Naive thymus-derived CD4-positive, alpha-beta T cell (primary cell): ENCODE measurements at regions of chrX and their contacts with region 1.

Region 1: DNA sequence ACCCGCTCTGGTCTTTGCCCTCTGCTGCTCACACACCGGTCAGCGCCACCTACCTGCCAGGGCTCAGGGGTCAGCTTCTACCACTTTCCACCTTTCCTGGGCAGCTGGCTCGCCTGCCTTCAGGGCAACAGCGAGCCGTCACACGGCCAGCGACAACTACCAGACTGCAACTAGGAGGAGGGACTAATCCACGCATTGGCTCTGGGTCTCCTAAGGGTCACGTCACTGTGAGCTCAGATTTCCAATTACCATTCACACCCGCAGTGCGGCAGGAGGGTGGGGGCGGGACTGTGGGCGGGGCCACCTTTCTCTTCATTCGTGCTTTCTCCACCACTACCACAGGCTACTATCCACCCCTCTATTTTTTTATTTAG is at the start of gene BEX5:
- DNase-seq: peak in 8 of 9 donors; percentile 20 to 74 (median 62)
- ATAC-seq: peak; percentile 98
- H3K4me3 ChIP-seq: peak within 1 kb of the TSS; percentile 74
- H3K4me3 Mint-ChIP-seq: peak within 1 kb of the TSS; percentile 92 to 99 (median 98)
- H3K27ac ChIP-seq: peak within 1 kb of the TSS; percentile 83
- H3K27ac Mint-ChIP-seq: peak within 1 kb of the TSS; percentile 92 to 99 (median 96)
- H3K4me1 ChIP-seq: no peaks in the 10 kb centered on the region
- H3K4me1 Mint-ChIP-seq: peaks cover 4 to 20% (median 5%) of the 10 kb centered on the region in 7 donors
- H3K27me3 ChIP-seq: no peaks in the 10 kb centered on the region
- H3K27me3 Mint-ChIP-seq: peaks cover 0 to 6% (median 0%) of the 10 kb centered on the region in 5 donors
- total RNA-seq, gene BEX5: 1.8 to 10.1 (median 6.8) TPM

Region 2: DNA sequence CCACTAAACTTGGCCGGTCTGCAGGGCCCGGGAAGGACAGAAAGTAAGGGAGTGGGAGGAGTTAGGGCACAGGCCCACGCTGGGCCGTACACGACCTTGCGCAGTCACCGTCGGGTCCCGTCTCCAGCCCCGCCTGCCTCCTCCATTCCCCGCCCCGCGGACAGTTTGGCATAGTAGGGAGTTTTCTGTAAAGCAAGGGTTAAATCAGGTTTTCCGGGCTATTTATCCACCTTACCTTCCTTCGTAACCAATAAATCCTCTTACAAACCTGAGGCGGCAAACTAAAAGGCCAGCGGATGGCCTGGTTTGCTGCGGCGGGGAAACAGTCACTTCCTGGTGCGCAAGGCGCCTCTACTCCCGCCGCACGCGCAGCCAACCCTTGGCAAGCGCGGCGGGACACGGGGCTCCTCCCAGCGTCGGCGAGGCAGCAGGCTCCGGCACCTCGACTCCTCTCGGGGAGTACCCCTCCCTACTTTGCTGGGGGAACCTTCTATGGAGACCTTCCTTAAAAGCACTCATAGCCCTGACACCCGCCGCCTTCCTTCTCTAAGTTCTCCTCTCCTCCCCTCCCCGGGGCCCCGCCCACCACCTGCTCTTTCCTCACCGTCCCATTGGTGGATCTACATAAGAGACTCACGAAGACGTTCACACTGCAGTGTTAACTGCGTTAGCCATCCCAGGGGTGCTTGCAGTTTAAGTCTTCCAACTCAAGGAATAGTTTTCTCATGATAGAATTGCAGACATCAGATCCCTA is 1104.1 kb before region 1 on chrX and contains the start of gene TRMT2B:
- CTCF ChIA-PET with region 1: no interaction called
- POLR2A ChIA-PET with region 1: interaction called, 5 read pairs
- intact Hi-C with region 1: loop called in 1 of 2 experiments (anchors 5 kb)
- DNase-seq: peak; percentile 47 to 87 (median 80)
- ATAC-seq: peak; percentile 92
- H3K4me3 ChIP-seq: peak within 1 kb of the TSS; percentile 81
- H3K4me3 Mint-ChIP-seq: peak within 1 kb of the TSS; percentile 78 to 94 (median 92)
- H3K27ac ChIP-seq: peak within 1 kb of the TSS; percentile 93
- H3K27ac Mint-ChIP-seq: peak within 1 kb of the TSS; percentile 95 to 98 (median 97)
- H3K4me1 ChIP-seq: peaks cover 4% of the 10 kb centered on the region in 2 donors
- H3K4me1 Mint-ChIP-seq: peaks cover 12 to 43% (median 22%) of the 10 kb centered on the region in 7 donors
- H3K27me3 ChIP-seq: no peaks in the 10 kb centered on the region
- H3K27me3 Mint-ChIP-seq: no peaks in the 10 kb centered on the region
- total RNA-seq, gene TRMT2B: 25.5 to 51.1 (median 41.4) TPM

Region 3: GRCh38 chrX:101415180-101416145 is 740.3 kb before region 1 on chrX:
- CTCF ChIA-PET with region 1: no interaction called
- POLR2A ChIA-PET with region 1: no interaction called
- intact Hi-C with region 1: loop called in 1 of 2 experiments (anchors 1 kb)
- DNase-seq: peak in 8 of 9 donors; percentile 23 to 70 (median 62)
- ATAC-seq: peak; percentile 83
- H3K4me3 ChIP-seq: no peak overlapping the region
- H3K4me3 Mint-ChIP-seq: peak overlapping the region; percentile 5 to 59 (median 41)
- H3K27ac ChIP-seq: peak overlapping the region; percentile 66
- H3K27ac Mint-ChIP-seq: peak overlapping the region; percentile 72 to 97 (median 88)
- H3K4me1 ChIP-seq: peaks cover 3 to 8% of the 10 kb centered on the region in 2 donors
- H3K4me1 Mint-ChIP-seq: peaks cover 16 to 59% (median 50%) of the 10 kb centered on the region in 7 donors
- H3K27me3 ChIP-seq: no peaks in the 10 kb centered on the region
- H3K27me3 Mint-ChIP-seq: no peaks in the 10 kb centered on the region

Region 4: GRCh38 chrX:101931488-101932248 is 224.1 kb before region 1 on chrX and contains the start of gene ZMAT1:
- CTCF ChIA-PET with region 1: no interaction called
- POLR2A ChIA-PET with region 1: interaction called, 8 read pairs
- intact Hi-C with region 1: loop called (anchors 2 to 5 kb)
- DNase-seq: peak; percentile 73 to 92 (median 87)
- ATAC-seq: peak; percentile 93
- H3K4me3 ChIP-seq: peak within 1 kb of the TSS; percentile 63
- H3K4me3 Mint-ChIP-seq: peak within 1 kb of the TSS; percentile 80 to 95 (median 88)
- H3K27ac ChIP-seq: peak within 1 kb of the TSS; percentile 89
- H3K27ac Mint-ChIP-seq: peak within 1 kb of the TSS; percentile 87 to 99 (median 96)
- H3K4me1 ChIP-seq: peaks cover 0 to 8% of the 10 kb centered on the region in 2 donors
- H3K4me1 Mint-ChIP-seq: peaks cover 8 to 44% (median 33%) of the 10 kb centered on the region in 7 donors
- H3K27me3 ChIP-seq: no peaks in the 10 kb centered on the region
- H3K27me3 Mint-ChIP-seq: no peaks in the 10 kb centered on the region
- total RNA-seq, gene ZMAT1: 3.0 to 48.3 (median 32.2) TPM

Region 5: GRCh38 chrX:102599084-102599950 is 443.5 kb after region 1 on chrX and contains the start of gene ARMCX5:
- CTCF ChIA-PET with region 1: no interaction called
- POLR2A ChIA-PET with region 1: no interaction called
- intact Hi-C with region 1: loop called in 1 of 2 experiments (anchors 5 kb)
- DNase-seq: peak; percentile 26 to 82 (median 74)
- ATAC-seq: peak; percentile 93
- H3K4me3 ChIP-seq: peak within 1 kb of the TSS; percentile 98
- H3K4me3 Mint-ChIP-seq: peak within 1 kb of the TSS; percentile 83 to 99 (median 96)
- H3K27ac ChIP-seq: peak within 1 kb of the TSS; percentile 79
- H3K27ac Mint-ChIP-seq: peak within 1 kb of the TSS; percentile 92 to 99 (median 97)
- H3K4me1 ChIP-seq: peaks cover 2 to 3% of the 10 kb centered on the region in 2 donors
- H3K4me1 Mint-ChIP-seq: peaks cover 0 to 53% (median 39%) of the 10 kb centered on the region in 7 donors
- H3K27me3 ChIP-seq: no peaks in the 10 kb centered on the region
- H3K27me3 Mint-ChIP-seq: no peaks in the 10 kb centered on the region
- total RNA-seq, gene ARMCX5: 8.2 to 13.1 (median 12.3) TPM

Region 6: DNA sequence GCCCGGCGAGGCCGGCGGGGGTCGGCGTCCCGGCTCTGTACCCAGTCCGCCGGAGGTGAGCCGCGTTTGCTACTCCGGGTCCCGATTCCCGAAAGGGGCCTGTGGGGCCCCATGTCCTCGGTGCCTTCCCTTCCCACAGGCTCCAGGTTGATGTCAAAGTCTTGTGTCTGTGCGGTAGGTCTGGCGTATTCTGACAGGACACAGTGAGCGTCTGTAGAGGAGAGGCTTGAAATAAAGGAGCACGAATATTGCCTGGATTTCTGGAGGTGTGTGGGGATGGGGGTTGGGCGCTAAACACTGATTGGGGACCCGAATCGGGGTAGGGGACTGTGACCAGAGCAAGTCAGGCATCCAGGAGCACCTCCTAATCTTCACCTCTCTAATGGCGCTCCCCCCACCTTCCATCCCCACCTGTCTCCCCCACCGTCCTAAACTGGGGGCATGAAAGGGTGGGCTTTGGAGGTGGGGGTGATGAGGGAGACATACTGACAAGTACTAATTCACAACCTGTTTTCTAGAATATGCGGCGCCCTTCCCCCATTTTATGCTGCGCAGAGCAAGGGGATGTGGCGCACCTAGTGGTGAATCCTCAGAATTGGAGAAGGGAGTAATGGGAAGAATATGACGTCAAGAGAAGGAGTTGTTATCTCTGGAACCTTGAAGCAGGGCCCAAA is 557.3 kb after region 1 on chrX:
- CTCF ChIA-PET with region 1: no interaction called
- POLR2A ChIA-PET with region 1: no interaction called
- intact Hi-C with region 1: loop called in 1 of 2 experiments (anchors 5 kb)
- DNase-seq: peak in 7 of 9 donors; percentile 9 to 33 (median 23)
- ATAC-seq: no peak
- H3K4me3 ChIP-seq: peak overlapping the region; percentile 50
- H3K4me3 Mint-ChIP-seq: peak overlapping the region; percentile 70 to 94 (median 88)
- H3K27ac ChIP-seq: peak overlapping the region; percentile 14
- H3K27ac Mint-ChIP-seq: peak overlapping the region in 6 of 9 donors; percentile 36 to 93 (median 56)
- H3K4me1 ChIP-seq: peaks cover 0 to 8% of the 10 kb centered on the region in 2 donors
- H3K4me1 Mint-ChIP-seq: peaks cover 5 to 36% (median 25%) of the 10 kb centered on the region in 7 donors
- H3K27me3 ChIP-seq: no peaks in the 10 kb centered on the region
- H3K27me3 Mint-ChIP-seq: peaks cover 5 to 31% (median 8%) of the 10 kb centered on the region in 5 donors

Region 7: DNA sequence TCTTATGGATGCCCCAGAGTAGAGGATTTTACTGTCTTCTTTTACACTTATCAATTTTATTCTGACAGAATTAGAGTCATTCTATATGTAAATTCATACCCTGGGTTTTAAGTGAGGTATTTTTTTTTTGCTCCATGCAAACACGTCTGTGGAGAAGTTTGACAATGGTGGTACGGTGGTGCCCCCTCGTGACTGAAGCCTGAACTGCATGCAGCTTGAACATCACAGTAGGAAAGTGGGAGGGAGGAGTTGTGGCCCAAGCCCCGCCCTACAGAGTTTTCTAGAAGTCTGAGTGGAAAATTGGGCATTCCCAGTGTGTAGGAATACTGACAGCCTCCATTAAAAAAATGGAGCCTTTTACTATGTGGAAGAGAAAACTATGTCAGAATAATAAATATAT is 707.9 kb after region 1 on chrX:
- CTCF ChIA-PET with region 1: no interaction called
- POLR2A ChIA-PET with region 1: no interaction called
- intact Hi-C with region 1: loop called in 1 of 2 experiments (anchors 1 kb)
- DNase-seq: peak; percentile 57 to 82 (median 70)
- ATAC-seq: peak; percentile 99
- H3K4me3 ChIP-seq: no peak overlapping the region
- H3K4me3 Mint-ChIP-seq: no peak overlapping the region
- H3K27ac ChIP-seq: no peak overlapping the region
- H3K27ac Mint-ChIP-seq: no peak overlapping the region
- H3K4me1 ChIP-seq: no peaks in the 10 kb centered on the region
- H3K4me1 Mint-ChIP-seq: no peaks in the 10 kb centered on the region
- H3K27me3 ChIP-seq: no peaks in the 10 kb centered on the region
- H3K27me3 Mint-ChIP-seq: no peaks in the 10 kb centered on the region